ENCODE measurements at regions of chr16 and their contacts with region 1.

Region 1: GRCh38 chr16:89775223-89775622 is 41.2 kb downstream of the FANCA start:
- DNase-seq: no peak
- H3K4me3 ChIP-seq: no peak overlapping the region
- H3K4me3 Mint-ChIP-seq: no peak overlapping the region
- H3K27ac Mint-ChIP-seq: no peak overlapping the region
- H3K4me1 ChIP-seq: no peaks in the 10 kb centered on the region
- H3K4me1 Mint-ChIP-seq: no peaks in the 10 kb centered on the region
- H3K27me3 ChIP-seq: no peaks in the 10 kb centered on the region
- H3K27me3 Mint-ChIP-seq: no peaks in the 10 kb centered on the region
- CTCF ChIP-seq: no peak

Region 2: GRCh38 chr16:89623511-89624261 is 151.5 kb before region 1 on chr16:
- CTCF ChIA-PET with region 1: no interaction called
- POLR2A ChIA-PET with region 1: no interaction called
- intact Hi-C with region 1: no loop called
- DNase-seq: no peak
- H3K4me3 ChIP-seq: no peak overlapping the region
- H3K4me3 Mint-ChIP-seq: no peak overlapping the region
- H3K27ac Mint-ChIP-seq: peak overlapping the region; percentile 64
- H3K4me1 ChIP-seq: peaks cover 40% of the 10 kb centered on the region
- H3K4me1 Mint-ChIP-seq: peaks cover 25% of the 10 kb centered on the region
- H3K27me3 ChIP-seq: no peaks in the 10 kb centered on the region
- H3K27me3 Mint-ChIP-seq: no peaks in the 10 kb centered on the region
- CTCF ChIP-seq: no peak

Region 3: DNA sequence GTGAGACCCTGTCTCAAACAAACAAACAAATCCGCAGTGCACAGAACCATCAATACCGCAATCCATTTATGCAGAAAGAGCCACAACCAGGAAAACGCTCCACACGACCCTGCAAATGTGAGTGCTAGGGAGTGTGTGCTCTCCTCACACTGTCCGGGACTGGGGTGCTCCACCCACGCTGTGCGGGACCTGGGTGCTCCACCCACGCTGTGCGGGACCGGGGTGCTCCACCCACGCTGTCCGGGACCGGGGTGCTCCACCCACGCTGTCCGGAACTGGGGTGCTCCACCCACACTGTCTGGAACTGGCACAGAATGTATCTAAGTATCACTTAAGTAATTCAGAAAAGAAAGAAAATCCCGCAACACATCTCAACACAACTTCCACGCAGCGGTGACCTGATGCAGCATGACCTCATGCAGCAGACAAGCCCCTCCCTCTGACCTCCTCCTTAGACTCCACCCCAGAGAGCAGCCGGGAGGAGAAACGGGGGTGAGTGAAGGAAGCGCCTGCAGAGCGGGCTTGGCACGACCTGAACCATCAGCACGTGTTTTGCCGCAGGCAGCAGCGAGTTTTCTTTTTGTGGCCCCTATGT is 15.4 kb before region 1 on chr16:
- CTCF ChIA-PET with region 1: no interaction called
- POLR2A ChIA-PET with region 1: interaction called, 11 read pairs
- intact Hi-C with region 1: no loop called
- DNase-seq: no peak
- H3K4me3 ChIP-seq: no peak overlapping the region
- H3K4me3 Mint-ChIP-seq: no peak overlapping the region
- H3K27ac Mint-ChIP-seq: peak overlapping the region; percentile 49
- H3K4me1 ChIP-seq: no peaks in the 10 kb centered on the region
- H3K4me1 Mint-ChIP-seq: no peaks in the 10 kb centered on the region
- H3K27me3 ChIP-seq: no peaks in the 10 kb centered on the region
- H3K27me3 Mint-ChIP-seq: no peaks in the 10 kb centered on the region
- CTCF ChIP-seq: no peak

Region 4: DNA sequence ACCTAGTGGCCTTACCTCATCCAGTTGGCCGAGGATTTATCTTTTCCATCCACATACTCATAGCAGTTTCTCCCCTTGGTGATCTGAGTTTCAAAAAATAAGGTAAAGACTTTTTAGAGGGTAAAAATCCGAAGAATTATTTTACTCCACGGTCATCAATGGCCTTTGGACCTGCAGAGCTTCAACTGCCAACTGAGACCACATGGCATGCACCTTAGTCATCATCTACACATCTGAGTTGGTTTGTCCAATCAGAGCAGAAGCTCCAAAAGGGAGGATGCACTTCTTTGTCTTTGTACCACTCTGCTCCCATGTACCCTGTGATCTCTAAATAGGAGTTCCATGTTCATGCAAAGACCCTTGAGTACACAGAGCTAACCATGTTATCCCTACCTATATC is 286.2 kb after region 1 on chr16:
- CTCF ChIA-PET with region 1: no interaction called
- POLR2A ChIA-PET with region 1: no interaction called
- intact Hi-C with region 1: no loop called
- DNase-seq: no peak
- H3K4me3 ChIP-seq: no peak overlapping the region
- H3K4me3 Mint-ChIP-seq: no peak overlapping the region
- H3K27ac Mint-ChIP-seq: no peak overlapping the region
- H3K4me1 ChIP-seq: peaks cover 23% of the 10 kb centered on the region
- H3K4me1 Mint-ChIP-seq: peaks cover 14% of the 10 kb centered on the region
- H3K27me3 ChIP-seq: no peaks in the 10 kb centered on the region
- H3K27me3 Mint-ChIP-seq: no peaks in the 10 kb centered on the region
- CTCF ChIP-seq: no peak

Measured in Caco-2 (cell line).